ENCODE measurements at regions of chr15 and their contacts with region 1.

Region 1: GRCh38 chr15:94163999-94164807 is 67.2 kb upstream of the MCTP2 start:
- DNase-seq: peak; percentile 60
- H3K4me3 ChIP-seq: peak overlapping the region in 1 of 2 experiments; percentile 32; a peak in 1 of 4 replicates
- H3K27ac ChIP-seq: no peak overlapping the region
- H3K4me1 ChIP-seq: no peaks in the 10 kb centered on the region
- H3K27me3 ChIP-seq: no peaks in the 10 kb centered on the region
- CTCF ChIP-seq: peak; percentile 73
- EP300 ChIP-seq: no peak
- RAD21 ChIP-seq: peak; percentile 95

Region 2: GRCh38 chr15:93819826-93820225 is 344.4 kb before region 1 on chr15:
- CTCF ChIA-PET with region 1: no interaction called
- POLR2A ChIA-PET with region 1: no interaction called
- DNase-seq: no peak
- H3K4me3 ChIP-seq: no peak overlapping the region
- H3K27ac ChIP-seq: no peak overlapping the region
- H3K4me1 ChIP-seq: peaks cover 0 to 6% of the 10 kb centered on the region in 2 experiments; a peak in 1 of 4 replicates
- H3K27me3 ChIP-seq: no peaks in the 10 kb centered on the region
- CTCF ChIP-seq: no peak
- EP300 ChIP-seq: no peak
- RAD21 ChIP-seq: no peak

Region 3: GRCh38 chr15:94145046-94145445 is 19.2 kb before region 1 on chr15:
- CTCF ChIA-PET with region 1: interaction called, 14 read pairs
- POLR2A ChIA-PET with region 1: no interaction called
- DNase-seq: no peak
- H3K4me3 ChIP-seq: no peak overlapping the region
- H3K27ac ChIP-seq: no peak overlapping the region
- H3K4me1 ChIP-seq: no peaks in the 10 kb centered on the region
- H3K27me3 ChIP-seq: no peaks in the 10 kb centered on the region
- CTCF ChIP-seq: no peak
- EP300 ChIP-seq: no peak
- RAD21 ChIP-seq: no peak

Region 4: DNA sequence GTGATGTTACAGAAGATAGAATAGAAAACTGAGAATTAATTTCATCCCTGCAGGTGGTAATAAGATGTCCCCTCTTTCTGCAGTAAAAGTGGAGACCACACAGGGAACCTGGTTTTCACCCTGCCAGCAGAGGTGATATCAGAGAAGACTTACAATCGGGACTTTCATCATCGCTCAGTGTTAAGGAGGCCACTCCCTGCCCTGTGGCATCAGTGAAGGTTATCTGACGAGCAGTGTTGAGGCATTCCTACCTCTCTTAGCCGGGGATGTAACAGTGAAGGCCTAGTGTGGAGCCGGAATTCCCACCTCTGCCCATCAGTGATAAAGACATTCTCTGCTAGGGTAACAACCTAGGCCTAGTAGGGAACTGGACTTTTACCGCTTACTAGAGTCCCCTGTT is 16.9 kb after region 1 on chr15:
- CTCF ChIA-PET with region 1: interaction called, 16 read pairs
- POLR2A ChIA-PET with region 1: no interaction called
- DNase-seq: no peak
- H3K4me3 ChIP-seq: no peak overlapping the region
- H3K27ac ChIP-seq: no peak overlapping the region
- H3K4me1 ChIP-seq: no peaks in the 10 kb centered on the region
- H3K27me3 ChIP-seq: no peaks in the 10 kb centered on the region
- CTCF ChIP-seq: no peak
- EP300 ChIP-seq: no peak
- RAD21 ChIP-seq: no peak

Region 5: GRCh38 chr15:94314639-94315038 is 150.4 kb after region 1 on chr15:
- CTCF ChIA-PET with region 1: interaction called, 364 read pairs
- POLR2A ChIA-PET with region 1: no interaction called
- DNase-seq: no peak
- H3K4me3 ChIP-seq: no peak overlapping the region
- H3K27ac ChIP-seq: no peak overlapping the region
- H3K4me1 ChIP-seq: no peaks in the 10 kb centered on the region; a peak in 1 of 4 replicates
- H3K27me3 ChIP-seq: no peaks in the 10 kb centered on the region
- CTCF ChIP-seq: no peak
- EP300 ChIP-seq: no peak
- RAD21 ChIP-seq: no peak

Region 6: GRCh38 chr15:94335616-94336015 is 171.4 kb after region 1 on chr15:
- CTCF ChIA-PET with region 1: interaction called, 47 read pairs
- POLR2A ChIA-PET with region 1: no interaction called
- DNase-seq: no peak
- H3K4me3 ChIP-seq: no peak overlapping the region
- H3K27ac ChIP-seq: no peak overlapping the region
- H3K4me1 ChIP-seq: no peaks in the 10 kb centered on the region; a peak in 1 of 4 replicates
- H3K27me3 ChIP-seq: no peaks in the 10 kb centered on the region
- CTCF ChIP-seq: no peak
- EP300 ChIP-seq: no peak
- RAD21 ChIP-seq: no peak

Region 7: GRCh38 chr15:94412979-94413746 is 249.0 kb after region 1 on chr15:
- CTCF ChIA-PET with region 1: interaction called, 16 read pairs
- POLR2A ChIA-PET with region 1: no interaction called
- DNase-seq: no peak
- H3K4me3 ChIP-seq: peak overlapping the region in 1 of 2 experiments; percentile 41; a peak in 1 of 4 replicates
- H3K27ac ChIP-seq: no peak overlapping the region
- H3K4me1 ChIP-seq: peaks cover 0 to 23% of the 10 kb centered on the region in 2 experiments; a peak in 2 of 4 replicates
- H3K27me3 ChIP-seq: no peaks in the 10 kb centered on the region
- CTCF ChIP-seq: peak; percentile 47
- EP300 ChIP-seq: no peak
- RAD21 ChIP-seq: peak; percentile 73